ENCODE measurements at regions of chr20 and their contacts with region 1.

Region 1: DNA sequence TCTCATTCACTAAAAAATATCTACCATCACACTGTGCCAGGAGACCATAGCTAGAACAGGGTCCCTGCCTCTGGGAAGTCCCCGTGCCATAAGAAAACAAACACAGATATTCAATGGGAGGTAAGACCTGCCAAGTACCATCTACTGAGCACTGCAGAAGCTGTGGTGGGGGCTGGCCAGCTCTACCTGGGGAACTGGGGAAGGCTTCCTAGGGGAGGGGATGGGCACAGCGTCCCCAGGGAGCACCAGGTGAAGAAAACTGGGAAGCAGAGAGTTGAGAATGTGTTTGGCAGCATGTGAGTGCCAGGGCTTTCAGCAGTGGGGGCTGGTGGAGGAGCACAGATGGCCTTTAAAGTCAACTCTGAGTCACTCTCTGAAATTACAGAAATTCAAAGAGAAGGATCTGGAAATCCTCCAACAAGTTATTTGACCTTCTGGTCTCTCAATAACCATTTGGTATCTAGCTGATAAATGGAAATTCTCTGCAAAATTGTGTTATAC is 85.2 kb downstream of the SHLD1 start:
- DNase-seq: no peak
- CTCF ChIP-seq: no peak

Region 2: GRCh38 chr20:5569021-5569420 is 266.4 kb before region 1 on chr20:
- CTCF ChIA-PET with region 1: no interaction called
- POLR2A ChIA-PET with region 1: no interaction called
- DNase-seq: no peak
- CTCF ChIP-seq: peak; percentile 31

Region 3: GRCh38 chr20:5822569-5822968 is 12.8 kb before region 1 on chr20:
- CTCF ChIA-PET with region 1: interaction called, 14 read pairs
- POLR2A ChIA-PET with region 1: no interaction called
- DNase-seq: peak; percentile 26
- CTCF ChIP-seq: no peak